GM10248 (cell line): ENCODE measurements at regions of chr16 and their contacts with region 1.

Region 1: DNA sequence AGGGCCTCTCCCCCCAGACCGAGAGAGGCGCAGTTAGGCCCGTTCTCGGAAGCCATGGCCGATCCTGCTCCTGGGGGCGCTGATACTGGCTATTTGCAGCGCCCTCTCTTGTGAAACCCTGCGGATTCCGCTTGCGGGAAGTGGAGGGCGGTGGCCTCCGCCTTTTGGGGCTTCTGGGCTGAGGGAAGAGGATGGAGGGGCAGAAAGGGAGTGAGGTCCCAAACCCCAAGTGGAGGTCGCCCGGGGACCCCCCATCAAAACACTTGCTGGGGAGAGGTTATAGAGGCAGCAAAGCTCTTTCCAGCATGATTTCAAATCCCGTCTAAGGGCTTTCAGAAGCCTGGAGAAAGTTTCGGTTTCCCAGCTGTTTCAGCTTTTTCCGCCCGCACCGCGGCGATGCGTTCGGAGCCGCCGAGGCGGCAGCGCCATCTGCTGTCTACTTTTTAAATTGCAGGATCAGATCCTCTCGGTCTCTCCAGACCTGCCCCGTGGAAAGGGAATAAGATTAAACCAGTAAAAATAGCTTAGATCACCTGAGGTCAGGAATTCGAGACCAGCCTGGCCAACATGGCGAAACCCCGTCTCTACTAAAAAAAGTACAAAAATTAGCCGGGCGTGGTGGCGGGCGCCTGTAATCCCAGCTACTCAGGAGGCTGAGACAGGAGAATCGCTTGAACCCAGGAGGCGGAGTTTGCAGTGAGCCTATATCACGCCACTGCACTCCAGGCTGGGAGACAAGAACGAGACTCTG is 15.8 kb downstream of the SNX20 start:
- DNase-seq: peak; percentile 78
- CTCF ChIP-seq: peak; percentile 75

Region 2: DNA sequence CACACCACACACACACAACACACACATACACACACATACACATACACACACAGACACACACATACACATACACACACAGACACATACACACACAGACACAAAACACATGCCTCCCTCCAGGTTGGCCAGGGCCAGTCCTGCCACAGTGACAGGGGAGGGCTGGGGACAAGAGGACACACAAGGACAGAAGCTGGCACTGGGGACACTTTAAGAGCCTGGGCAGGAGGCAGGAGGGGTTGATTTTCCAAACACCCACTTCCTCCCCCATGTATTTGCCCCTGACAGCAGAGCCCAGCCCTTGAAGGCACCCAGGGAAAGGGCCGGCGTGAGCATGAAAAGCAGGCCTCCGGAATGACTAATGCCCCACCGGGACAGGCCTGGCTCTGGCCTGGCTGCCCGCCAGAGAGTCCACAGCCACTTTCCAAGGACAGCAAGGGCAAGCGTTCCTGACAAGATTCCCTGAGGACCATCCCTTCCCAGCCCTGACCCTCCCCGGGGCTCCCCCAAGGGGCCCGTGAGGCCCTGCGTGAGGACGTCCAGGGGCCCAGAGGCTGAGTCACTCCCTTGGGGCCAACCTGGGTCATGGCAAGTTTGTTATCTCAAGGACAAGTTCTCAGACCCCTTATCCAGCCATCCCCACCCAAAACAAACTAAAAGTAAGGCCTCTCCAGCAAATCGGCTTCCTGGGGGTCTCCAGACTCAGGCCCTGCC is 1045.0 kb before region 1 on chr16:
- CTCF ChIA-PET with region 1: no interaction called
- POLR2A ChIA-PET with region 1: no interaction called
- DNase-seq: no peak
- CTCF ChIP-seq: no peak

Region 3: DNA sequence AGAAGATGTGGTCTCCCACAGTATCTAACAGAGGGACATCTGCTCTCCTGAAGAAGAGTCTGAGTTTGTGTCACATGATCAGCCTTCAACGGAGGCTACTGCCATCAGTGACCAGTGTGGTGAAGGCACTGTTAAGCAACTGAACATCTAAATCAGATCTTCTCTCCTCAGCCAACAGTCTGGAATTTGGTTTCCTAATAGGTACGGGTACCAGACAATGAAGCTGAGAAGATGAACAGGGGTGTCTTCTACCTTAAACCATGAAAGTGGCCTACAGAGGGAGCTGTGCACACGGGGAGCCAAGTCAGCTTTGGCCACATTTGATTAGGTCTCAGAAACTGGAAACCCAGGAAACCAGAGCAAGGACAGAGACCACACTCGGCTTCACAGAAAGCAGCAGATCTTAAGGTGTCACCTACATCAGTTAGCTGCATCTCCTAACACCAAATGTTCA is 338.3 kb before region 1 on chr16:
- CTCF ChIA-PET with region 1: interaction called, 50 read pairs
- POLR2A ChIA-PET with region 1: interaction called, 6 read pairs
- DNase-seq: peak; percentile 49
- CTCF ChIP-seq: peak; percentile 51

Region 4: DNA sequence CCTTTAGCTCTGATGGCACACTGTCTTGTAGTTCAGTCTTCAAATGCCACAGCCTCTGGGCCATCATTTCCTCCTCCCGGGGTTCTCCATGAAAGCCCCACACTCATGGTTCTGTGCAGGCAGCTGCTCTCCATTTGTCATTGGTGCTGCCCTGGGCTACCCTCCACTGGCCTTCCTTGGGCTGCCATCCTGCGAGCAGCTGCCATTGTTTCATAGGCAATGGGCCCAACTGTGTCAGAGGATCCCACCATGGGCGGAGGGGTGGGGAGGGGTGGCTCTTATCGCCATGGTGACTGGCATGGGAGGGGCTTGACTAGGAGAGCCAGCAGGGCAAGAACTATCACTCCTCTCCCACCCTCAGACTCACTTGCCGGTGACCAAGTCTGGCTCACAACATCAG is 258.0 kb before region 1 on chr16:
- CTCF ChIA-PET with region 1: no interaction called
- POLR2A ChIA-PET with region 1: no interaction called
- DNase-seq: no peak
- CTCF ChIP-seq: no peak

Region 5: GRCh38 chr16:50571786-50572185 is 93.5 kb before region 1 on chr16:
- CTCF ChIA-PET with region 1: no interaction called
- POLR2A ChIA-PET with region 1: no interaction called
- DNase-seq: no peak
- CTCF ChIP-seq: no peak

Region 6: GRCh38 chr16:50624449-50624970 is 40.8 kb before region 1 on chr16:
- CTCF ChIA-PET with region 1: interaction called, 11 read pairs
- POLR2A ChIA-PET with region 1: no interaction called
- DNase-seq: no peak
- CTCF ChIP-seq: no peak

Region 7: DNA sequence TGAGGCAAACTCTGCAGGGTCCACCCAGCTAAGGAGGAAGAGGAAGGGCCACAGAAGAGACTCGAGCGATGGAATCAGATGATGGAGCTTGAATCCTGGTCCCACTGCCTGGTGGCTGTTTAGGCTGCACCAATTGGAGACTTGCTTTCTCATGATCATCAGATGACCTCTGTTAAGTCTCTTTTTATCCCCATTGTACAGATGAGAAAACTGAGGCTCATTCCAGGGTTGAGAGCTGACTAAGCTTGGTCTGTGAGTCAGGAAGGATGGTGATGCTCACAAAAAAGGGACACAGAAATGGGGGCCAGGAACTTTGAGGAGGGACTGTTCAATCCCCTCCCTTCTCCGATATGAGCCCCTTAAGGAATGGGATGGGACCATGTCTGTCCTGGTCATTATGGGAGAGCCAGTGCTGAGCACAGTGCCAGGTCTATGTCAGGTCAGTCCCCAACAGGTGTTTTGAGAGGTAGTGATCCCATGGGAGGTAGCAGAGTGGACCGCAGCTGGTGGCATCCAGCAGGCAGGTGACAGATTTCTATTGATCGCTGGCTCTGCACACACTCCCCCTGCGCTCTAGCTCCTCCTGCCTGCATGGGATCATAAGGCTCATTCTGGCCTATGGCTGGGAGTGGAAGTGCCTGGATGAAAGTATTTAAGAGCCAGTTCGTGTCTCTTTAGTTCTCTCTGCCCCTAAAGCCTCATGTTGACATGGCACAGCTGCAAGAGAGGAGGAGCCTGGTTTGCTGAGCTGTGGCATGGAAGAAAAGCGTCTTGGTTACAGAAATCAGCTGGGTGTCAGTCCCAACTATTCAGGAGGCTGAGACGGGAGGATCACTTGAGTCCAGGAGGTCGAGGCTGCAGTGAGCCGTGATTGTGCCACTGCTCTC is 11.4 kb before region 1 on chr16:
- CTCF ChIA-PET with region 1: interaction called, 83 read pairs
- POLR2A ChIA-PET with region 1: interaction called, 3 read pairs
- DNase-seq: no peak
- CTCF ChIP-seq: no peak

Region 8: GRCh38 chr16:50797456-50797855 is 132.2 kb after region 1 on chr16:
- CTCF ChIA-PET with region 1: interaction called, 11 read pairs
- POLR2A ChIA-PET with region 1: no interaction called
- DNase-seq: no peak
- CTCF ChIP-seq: no peak